CD8-positive, alpha-beta memory T cell (primary cell): ENCODE measurements at regions of chr5 and their contacts with region 1.

Region 1: GRCh38 chr5:217860-218456 is at the starts of genes CCDC127 and SDHA:
- DNase-seq: peak; percentile 98 to 99 (median 99)
- H3K4me3 ChIP-seq: peak within 1 kb of the TSS; percentile 79
- H3K4me3 Mint-ChIP-seq: peak within 1 kb of the TSS; percentile 94 to 98 (median 97)
- H3K27ac ChIP-seq: peak within 1 kb of the TSS; percentile 73
- H3K27ac Mint-ChIP-seq: peak within 1 kb of the TSS; percentile 94 to 100 (median 96)
- H3K4me1 ChIP-seq: peaks cover 17% of the 10 kb centered on the region
- H3K4me1 Mint-ChIP-seq: peaks cover 48 to 64% (median 64%) of the 10 kb centered on the region in 3 donors
- H3K27me3 ChIP-seq: no peaks in the 10 kb centered on the region
- H3K27me3 Mint-ChIP-seq: peaks cover 0 to 1% of the 10 kb centered on the region in 2 donors
- total RNA-seq, gene CCDC127: 7.2 to 8.3 TPM
- total RNA-seq, gene SDHA: 168 to 171 TPM

Region 2: GRCh38 chr5:188488-189481 is 29.2 kb before region 1 on chr5:
- CTCF ChIA-PET with region 1: interaction called, 10 read pairs
- POLR2A ChIA-PET with region 1: interaction called, 5 read pairs
- DNase-seq: peak; percentile 79 to 90 (median 81)
- H3K4me3 ChIP-seq: no peak overlapping the region
- H3K4me3 Mint-ChIP-seq: peak overlapping the region in 5 of 7 donors; percentile 42 to 72 (median 57)
- H3K27ac ChIP-seq: no peak overlapping the region
- H3K27ac Mint-ChIP-seq: peak overlapping the region in 5 of 8 donors; percentile 6 to 83 (median 21)
- H3K4me1 ChIP-seq: peaks cover 5% of the 10 kb centered on the region
- H3K4me1 Mint-ChIP-seq: peaks cover 6 to 11% (median 6%) of the 10 kb centered on the region in 3 donors
- H3K27me3 ChIP-seq: peaks cover 5% of the 10 kb centered on the region
- H3K27me3 Mint-ChIP-seq: peaks cover 5 to 12% of the 10 kb centered on the region in 2 donors

Region 3: DNA sequence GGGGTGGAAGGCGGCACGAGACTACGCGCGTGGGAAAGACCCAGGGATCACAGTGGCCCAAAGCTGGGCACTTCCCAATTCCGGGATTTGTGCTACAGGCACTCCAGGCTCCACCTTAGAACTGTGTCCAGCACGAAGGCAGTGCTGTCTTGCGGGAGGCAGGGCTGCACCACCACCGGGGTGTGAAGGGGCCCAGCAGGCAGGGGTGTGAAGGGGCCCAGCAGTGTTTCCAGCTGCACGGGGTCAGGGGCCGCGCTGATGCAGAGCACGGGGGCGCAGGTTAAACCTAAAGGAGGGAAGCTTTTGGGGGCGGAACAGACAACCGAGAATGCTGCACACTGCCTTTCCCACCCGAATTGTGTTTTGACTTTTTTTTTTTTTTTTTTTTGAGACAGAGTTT is 52.4 kb after region 1 on chr5:
- CTCF ChIA-PET with region 1: no interaction called
- POLR2A ChIA-PET with region 1: interaction called, 28 read pairs
- DNase-seq: no peak
- H3K4me3 ChIP-seq: no peak overlapping the region
- H3K4me3 Mint-ChIP-seq: peak overlapping the region; percentile 84 to 97 (median 96)
- H3K27ac ChIP-seq: peak overlapping the region; percentile 78
- H3K27ac Mint-ChIP-seq: peak overlapping the region; percentile 27 to 97 (median 66)
- H3K4me1 ChIP-seq: no peaks in the 10 kb centered on the region
- H3K4me1 Mint-ChIP-seq: peaks cover 22 to 40% (median 34%) of the 10 kb centered on the region in 3 donors
- H3K27me3 ChIP-seq: no peaks in the 10 kb centered on the region
- H3K27me3 Mint-ChIP-seq: peaks cover 0 to 2% of the 10 kb centered on the region in 2 donors